ENCODE measurements at regions of chr20 and their contacts with region 1.

Region 1: GRCh38 chr20:53547664-53548239 is 45.9 kb downstream of the ZNF217 start:
- DNase-seq: peak in 6 of 9 experiments; percentile 17 to 60 (median 38)
- ATAC-seq: peak; percentile 51
- H3K4me3 ChIP-seq: no peak overlapping the region
- H3K4me3 Mint-ChIP-seq: no peak overlapping the region
- H3K27ac ChIP-seq: no peak overlapping the region
- H3K27ac Mint-ChIP-seq: no peak overlapping the region
- H3K4me1 ChIP-seq: no peaks in the 10 kb centered on the region
- H3K4me1 Mint-ChIP-seq: peaks cover 5% of the 10 kb centered on the region
- H3K27me3 ChIP-seq: no peaks in the 10 kb centered on the region
- H3K27me3 Mint-ChIP-seq: no peaks in the 10 kb centered on the region
- CTCF ChIP-seq: peak; percentile 67

Region 2: GRCh38 chr20:52242237-52243230 is 1305.2 kb before region 1 on chr20:
- CTCF ChIA-PET with region 1: interaction called, 7 read pairs
- POLR2A ChIA-PET with region 1: no interaction called
- intact Hi-C with region 1: loop called in 1 of 2 experiments (anchors 2 kb)
- DNase-seq: peak in 2 of 9 experiments; percentile 16 to 30
- ATAC-seq: no peak
- H3K4me3 ChIP-seq: no peak overlapping the region
- H3K4me3 Mint-ChIP-seq: no peak overlapping the region
- H3K27ac ChIP-seq: no peak overlapping the region
- H3K27ac Mint-ChIP-seq: no peak overlapping the region
- H3K4me1 ChIP-seq: no peaks in the 10 kb centered on the region
- H3K4me1 Mint-ChIP-seq: no peaks in the 10 kb centered on the region
- H3K27me3 ChIP-seq: no peaks in the 10 kb centered on the region
- H3K27me3 Mint-ChIP-seq: peaks cover 10% of the 10 kb centered on the region
- CTCF ChIP-seq: peak; percentile 84

Region 3: DNA sequence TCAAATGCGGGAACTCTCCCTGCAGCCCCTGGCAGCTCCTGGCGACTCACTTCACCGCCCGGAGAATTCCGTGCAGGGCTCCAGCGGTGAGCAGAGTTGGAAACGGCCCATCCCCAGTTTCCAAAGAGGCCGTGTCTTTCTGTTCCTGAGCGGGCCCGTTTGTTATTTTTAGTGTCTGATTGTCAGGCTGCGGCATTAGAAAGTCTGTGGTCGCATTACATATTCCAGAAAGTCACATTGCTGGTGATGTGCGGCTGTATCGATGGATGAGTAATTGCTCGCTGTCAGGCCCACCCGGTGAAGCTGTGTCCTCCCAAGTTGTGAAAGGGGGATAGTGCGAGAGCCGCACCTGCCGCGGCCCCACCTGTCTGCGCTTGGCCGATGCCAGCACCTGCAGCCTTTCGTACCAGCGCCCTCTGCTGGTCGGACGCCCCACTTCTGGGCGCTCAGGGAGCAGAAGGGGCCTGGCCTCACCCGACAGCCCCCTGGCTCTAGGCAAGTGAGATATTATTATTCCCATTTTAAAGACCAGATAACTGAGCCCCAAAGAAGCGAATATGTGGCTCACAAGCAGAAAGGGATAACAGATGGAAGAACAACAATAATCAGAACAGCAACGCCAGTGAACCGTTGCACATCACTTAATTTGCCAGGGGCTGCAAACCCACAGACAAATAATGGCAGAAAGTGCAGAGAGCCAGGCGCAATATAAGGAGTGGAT is 330.7 kb before region 1 on chr20:
- CTCF ChIA-PET with region 1: interaction called, 9 read pairs
- POLR2A ChIA-PET with region 1: no interaction called
- intact Hi-C with region 1: loop called in 1 of 2 experiments (anchors 10 kb)
- DNase-seq: peak; percentile 72 to 92 (median 80)
- ATAC-seq: peak; percentile 89
- H3K4me3 ChIP-seq: peak overlapping the region in 1 of 2 experiments; percentile 13
- H3K4me3 Mint-ChIP-seq: peak overlapping the region; percentile 60
- H3K27ac ChIP-seq: no peak overlapping the region
- H3K27ac Mint-ChIP-seq: no peak overlapping the region
- H3K4me1 ChIP-seq: peaks cover 22% of the 10 kb centered on the region
- H3K4me1 Mint-ChIP-seq: peaks cover 18% of the 10 kb centered on the region
- H3K27me3 ChIP-seq: no peaks in the 10 kb centered on the region
- H3K27me3 Mint-ChIP-seq: peaks cover 11% of the 10 kb centered on the region
- CTCF ChIP-seq: peak; percentile 97

Region 4: DNA sequence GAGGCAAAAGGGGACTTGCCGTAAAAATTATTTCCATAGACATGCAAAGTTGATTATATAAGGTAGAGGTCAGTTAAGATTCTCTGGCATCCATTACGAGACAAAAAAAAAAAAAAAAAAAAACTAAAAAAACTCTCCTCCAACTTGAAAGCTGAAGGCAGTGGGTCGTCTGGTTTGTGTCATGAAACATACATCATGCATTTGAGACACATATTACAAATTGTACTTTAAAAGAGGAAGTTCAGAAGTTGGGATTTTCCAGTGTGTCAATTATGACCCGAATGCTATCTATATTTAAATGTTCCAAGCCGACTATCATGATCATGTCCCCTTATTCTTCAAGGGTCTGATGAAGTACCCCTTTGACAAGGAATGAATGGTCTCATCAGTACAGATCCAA is 79.2 kb before region 1 on chr20:
- CTCF ChIA-PET with region 1: no interaction called
- POLR2A ChIA-PET with region 1: no interaction called
- intact Hi-C with region 1: no loop called
- DNase-seq: no peak
- ATAC-seq: no peak
- H3K4me3 ChIP-seq: no peak overlapping the region
- H3K4me3 Mint-ChIP-seq: no peak overlapping the region
- H3K27ac ChIP-seq: no peak overlapping the region
- H3K27ac Mint-ChIP-seq: no peak overlapping the region
- H3K4me1 ChIP-seq: no peaks in the 10 kb centered on the region
- H3K4me1 Mint-ChIP-seq: no peaks in the 10 kb centered on the region
- H3K27me3 ChIP-seq: no peaks in the 10 kb centered on the region
- H3K27me3 Mint-ChIP-seq: peaks cover 11% of the 10 kb centered on the region
- CTCF ChIP-seq: no peak

Region 5: DNA sequence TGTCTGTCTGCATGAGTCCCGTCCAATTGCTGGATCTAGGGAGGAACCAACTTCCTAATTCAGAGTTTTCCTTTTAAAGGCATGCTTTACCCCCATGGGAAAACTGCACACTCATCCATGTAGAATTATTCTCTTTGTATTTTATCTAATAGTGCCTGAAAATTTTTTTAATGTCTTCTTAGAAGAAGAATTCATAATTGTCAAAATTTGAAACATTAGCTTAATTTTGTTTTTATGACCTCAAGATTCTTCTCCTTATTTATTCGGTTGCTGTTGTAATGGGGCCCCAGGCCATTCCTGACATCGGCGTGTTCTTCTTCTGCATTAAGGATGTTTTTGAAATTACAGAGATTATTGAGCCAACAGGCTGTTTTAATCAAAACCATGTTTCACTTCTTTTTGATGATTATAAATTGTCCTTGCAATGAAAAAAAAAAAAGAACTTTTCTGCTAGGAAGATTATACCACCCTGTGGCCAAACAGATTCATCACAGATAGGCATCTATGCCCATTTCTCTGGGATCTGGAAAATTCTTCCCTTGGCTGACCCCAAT is 54.4 kb before region 1 on chr20:
- CTCF ChIA-PET with region 1: no interaction called
- POLR2A ChIA-PET with region 1: no interaction called
- intact Hi-C with region 1: no loop called
- DNase-seq: no peak
- ATAC-seq: no peak
- H3K4me3 ChIP-seq: no peak overlapping the region
- H3K4me3 Mint-ChIP-seq: no peak overlapping the region
- H3K27ac ChIP-seq: no peak overlapping the region
- H3K27ac Mint-ChIP-seq: no peak overlapping the region
- H3K4me1 ChIP-seq: no peaks in the 10 kb centered on the region
- H3K4me1 Mint-ChIP-seq: no peaks in the 10 kb centered on the region
- H3K27me3 ChIP-seq: no peaks in the 10 kb centered on the region
- H3K27me3 Mint-ChIP-seq: peaks cover 11% of the 10 kb centered on the region
- CTCF ChIP-seq: no peak

Region 6: DNA sequence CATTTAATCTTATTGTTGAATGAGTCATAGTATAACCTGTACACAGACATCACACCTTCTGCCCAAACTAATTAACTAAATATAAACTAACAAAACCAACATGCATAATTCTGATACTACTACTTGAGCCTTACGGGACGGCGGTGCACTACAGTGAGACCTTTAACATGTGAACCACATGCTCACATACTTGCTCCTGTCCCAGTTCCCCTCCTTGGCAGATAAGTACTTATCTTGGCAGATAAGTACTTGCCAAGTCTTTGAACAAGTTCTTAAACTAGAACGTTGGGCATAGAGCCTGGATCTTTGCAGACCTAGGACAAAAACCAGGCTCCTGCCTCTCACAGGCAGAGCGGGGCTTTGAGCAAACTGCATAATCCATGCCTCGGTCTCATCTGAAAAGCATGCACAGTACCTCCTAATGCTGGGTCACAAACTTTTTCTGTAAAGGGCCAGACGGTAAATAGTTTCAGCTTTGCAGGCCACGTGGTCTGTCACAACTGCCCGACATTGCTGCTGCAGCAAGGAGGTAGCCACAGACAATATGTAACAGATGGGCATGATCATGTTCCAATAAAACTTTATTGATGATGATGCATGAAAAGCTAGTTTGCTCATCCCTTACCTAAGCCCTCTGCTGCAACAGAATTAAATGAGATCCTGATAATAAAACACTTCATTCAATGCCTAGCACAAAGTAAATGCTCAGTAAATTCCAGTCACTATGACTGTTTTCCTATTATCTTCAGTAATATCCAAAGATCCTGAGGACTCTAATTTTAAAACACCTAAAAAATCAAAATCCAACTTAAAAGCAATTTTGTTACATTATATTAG is 23.0 kb after region 1 on chr20:
- CTCF ChIA-PET with region 1: no interaction called
- POLR2A ChIA-PET with region 1: no interaction called
- intact Hi-C with region 1: no loop called
- DNase-seq: peak in 1 of 9 experiments; percentile 23
- ATAC-seq: no peak
- H3K4me3 ChIP-seq: no peak overlapping the region
- H3K4me3 Mint-ChIP-seq: no peak overlapping the region
- H3K27ac ChIP-seq: no peak overlapping the region
- H3K27ac Mint-ChIP-seq: peak overlapping the region; percentile 52
- H3K4me1 ChIP-seq: peaks cover 44% of the 10 kb centered on the region
- H3K4me1 Mint-ChIP-seq: peaks cover 76% of the 10 kb centered on the region
- H3K27me3 ChIP-seq: no peaks in the 10 kb centered on the region
- H3K27me3 Mint-ChIP-seq: no peaks in the 10 kb centered on the region
- CTCF ChIP-seq: no peak

Region 7: GRCh38 chr20:53660078-53660909 is 112.5 kb after region 1 on chr20:
- CTCF ChIA-PET with region 1: no interaction called
- POLR2A ChIA-PET with region 1: no interaction called
- intact Hi-C with region 1: no loop called
- DNase-seq: peak in 6 of 9 experiments; percentile 10 to 68 (median 44)
- ATAC-seq: peak; percentile 47
- H3K4me3 ChIP-seq: peak overlapping the region; percentile 45 to 61
- H3K4me3 Mint-ChIP-seq: peak overlapping the region; percentile 87
- H3K27ac ChIP-seq: peak overlapping the region; percentile 49 to 67
- H3K27ac Mint-ChIP-seq: peak overlapping the region; percentile 94
- H3K4me1 ChIP-seq: peaks cover 53% of the 10 kb centered on the region
- H3K4me1 Mint-ChIP-seq: peaks cover 62% of the 10 kb centered on the region
- H3K27me3 ChIP-seq: no peaks in the 10 kb centered on the region
- H3K27me3 Mint-ChIP-seq: no peaks in the 10 kb centered on the region
- CTCF ChIP-seq: no peak

Region 8: GRCh38 chr20:53939572-53940359 is 392.0 kb after region 1 on chr20:
- CTCF ChIA-PET with region 1: interaction called, 12 read pairs
- POLR2A ChIA-PET with region 1: no interaction called
- intact Hi-C with region 1: no loop called
- DNase-seq: peak; percentile 38 to 83 (median 67)
- ATAC-seq: peak; percentile 76
- H3K4me3 ChIP-seq: no peak overlapping the region
- H3K4me3 Mint-ChIP-seq: no peak overlapping the region
- H3K27ac ChIP-seq: no peak overlapping the region
- H3K27ac Mint-ChIP-seq: no peak overlapping the region
- H3K4me1 ChIP-seq: peaks cover 31% of the 10 kb centered on the region
- H3K4me1 Mint-ChIP-seq: peaks cover 43% of the 10 kb centered on the region
- H3K27me3 ChIP-seq: no peaks in the 10 kb centered on the region
- H3K27me3 Mint-ChIP-seq: no peaks in the 10 kb centered on the region
- CTCF ChIP-seq: peak; percentile 75